ENCODE measurements at regions of chr7 and their contacts with region 1.

Region 1: DNA sequence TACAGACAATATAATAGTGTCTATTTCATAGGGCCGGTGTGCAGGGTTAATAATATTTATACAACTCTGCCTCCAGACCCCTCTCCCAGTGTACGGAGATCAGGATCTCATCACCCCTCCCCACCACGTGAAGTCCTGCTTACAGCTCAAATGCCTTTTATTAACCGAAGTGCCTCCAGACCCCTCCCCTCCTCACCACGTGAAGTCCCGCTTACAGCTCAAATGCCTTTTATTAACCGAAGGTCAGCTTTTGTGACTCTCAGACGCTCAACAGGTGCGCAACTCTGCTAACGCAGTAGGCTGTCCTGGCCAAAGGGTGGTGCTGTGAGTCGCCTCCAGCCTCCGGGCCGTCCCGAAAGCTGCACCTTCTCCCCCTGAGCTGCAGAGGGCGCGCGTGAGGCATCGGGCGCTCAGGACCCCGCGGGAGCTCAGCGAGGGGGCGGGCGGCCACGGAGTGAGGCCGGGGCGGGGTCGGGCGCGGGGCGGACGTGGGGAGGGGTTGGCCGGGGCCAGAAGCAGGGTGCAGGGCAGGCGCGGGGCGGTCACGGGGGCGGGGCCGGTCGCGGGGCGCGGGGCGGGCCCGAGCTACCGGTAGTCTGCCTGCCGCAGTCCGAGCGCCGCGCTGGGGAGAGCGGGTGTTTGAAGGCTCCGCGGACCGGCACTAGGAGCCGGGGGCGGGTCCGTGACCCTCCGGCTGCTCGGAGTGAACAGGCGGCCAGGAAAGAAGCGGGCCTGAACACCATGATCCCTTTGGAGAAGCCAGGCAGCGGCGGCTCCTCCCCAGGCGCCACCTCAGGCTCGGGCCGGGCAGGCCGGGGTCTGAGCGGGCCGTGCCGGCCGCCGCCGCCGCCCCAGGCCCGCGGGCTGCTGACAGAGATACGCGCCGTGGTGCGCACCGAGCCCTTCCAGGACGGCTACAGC is at the start of gene STK17A:
- H3K4me3 ChIP-seq: peak within 1 kb of the TSS; percentile 82
- H3K27ac ChIP-seq: peak within 1 kb of the TSS; percentile 87
- H3K4me1 ChIP-seq: peaks cover 21% of the 10 kb centered on the region
- CTCF ChIP-seq: peak; percentile 98

Region 2: GRCh38 chr7:43119371-43120075 is 463.2 kb before region 1 on chr7:
- CTCF ChIA-PET with region 1: no interaction called
- POLR2A ChIA-PET with region 1: no interaction called
- H3K4me3 ChIP-seq: no peak overlapping the region
- H3K27ac ChIP-seq: no peak overlapping the region
- H3K4me1 ChIP-seq: no peaks in the 10 kb centered on the region
- CTCF ChIP-seq: no peak

Region 3: DNA sequence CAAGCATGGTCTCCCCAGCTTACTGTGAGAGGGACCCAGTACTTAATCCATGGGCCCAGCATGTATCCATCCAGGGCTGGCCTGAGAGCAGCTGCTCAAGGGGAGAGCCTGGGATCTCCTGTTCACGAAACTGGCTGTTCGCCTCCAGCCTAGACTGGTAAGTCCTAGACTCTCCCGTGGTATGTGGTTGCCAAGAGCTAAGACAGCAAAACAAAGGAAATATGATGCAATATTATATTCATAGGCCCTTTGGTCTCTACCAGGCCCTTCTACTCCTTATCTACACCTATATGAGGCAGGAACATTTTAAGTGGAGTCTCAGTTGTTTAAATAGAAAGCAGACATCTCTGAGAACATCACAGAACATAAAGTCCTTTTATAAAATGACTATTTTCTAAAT is 28.8 kb before region 1 on chr7:
- CTCF ChIA-PET with region 1: interaction called, 11 read pairs
- POLR2A ChIA-PET with region 1: no interaction called
- H3K4me3 ChIP-seq: no peak overlapping the region
- H3K27ac ChIP-seq: no peak overlapping the region
- H3K4me1 ChIP-seq: no peaks in the 10 kb centered on the region
- CTCF ChIP-seq: no peak

Region 4: DNA sequence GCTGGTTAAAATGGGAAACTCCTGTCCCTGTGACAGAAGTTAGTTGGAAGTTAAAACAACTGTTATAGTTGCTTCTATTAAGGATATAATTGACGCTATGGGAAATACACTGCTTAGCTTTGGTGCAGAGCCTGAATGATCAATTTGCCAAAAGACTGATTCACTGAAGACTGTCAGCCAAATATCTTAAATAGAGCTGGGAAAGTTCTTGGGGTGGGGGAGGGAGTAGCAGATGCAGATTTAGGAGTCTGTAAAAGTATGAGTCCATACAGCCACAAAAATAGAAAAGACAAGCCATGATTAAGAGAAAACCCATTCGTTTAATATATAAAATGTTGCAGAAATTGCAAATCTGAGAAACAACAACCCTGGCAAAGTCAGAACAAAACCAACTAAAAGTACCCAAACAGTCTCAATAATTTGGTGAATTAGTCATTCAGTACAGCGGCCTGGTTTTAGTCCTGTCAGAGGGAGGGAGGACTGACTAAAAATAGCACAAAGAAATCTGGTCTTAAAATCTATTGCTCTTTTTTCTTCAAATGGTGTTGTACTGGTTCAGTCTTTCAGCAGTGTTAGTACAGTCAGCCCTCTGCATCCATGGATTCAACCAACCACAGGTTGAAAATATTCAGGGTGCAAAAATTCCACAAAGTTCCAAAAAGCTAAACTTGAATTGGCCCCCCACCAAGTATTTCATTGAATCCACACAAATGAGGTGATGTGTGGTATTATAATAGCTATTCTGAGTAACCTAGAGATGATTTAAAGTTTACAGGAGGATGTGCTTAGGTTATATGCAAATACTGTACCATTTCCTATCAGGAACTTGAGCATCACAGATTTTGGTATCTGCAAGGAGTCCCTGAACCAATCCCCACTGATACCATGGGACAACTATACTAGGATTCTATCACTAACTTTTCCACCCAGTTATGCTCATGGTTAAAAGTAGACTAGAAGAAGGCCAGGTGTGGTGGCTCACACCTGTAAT is 30.1 kb after region 1 on chr7:
- CTCF ChIA-PET with region 1: interaction called, 27 read pairs
- POLR2A ChIA-PET with region 1: interaction called, 12 read pairs
- H3K4me3 ChIP-seq: no peak overlapping the region
- H3K27ac ChIP-seq: no peak overlapping the region
- H3K4me1 ChIP-seq: no peaks in the 10 kb centered on the region
- CTCF ChIP-seq: no peak

Region 5: GRCh38 chr7:43639858-43640491 is 57.2 kb after region 1 on chr7:
- CTCF ChIA-PET with region 1: interaction called, 5 read pairs
- POLR2A ChIA-PET with region 1: interaction called, 11 read pairs
- H3K4me3 ChIP-seq: no peak overlapping the region
- H3K27ac ChIP-seq: no peak overlapping the region
- H3K4me1 ChIP-seq: no peaks in the 10 kb centered on the region
- CTCF ChIP-seq: no peak

Region 6: DNA sequence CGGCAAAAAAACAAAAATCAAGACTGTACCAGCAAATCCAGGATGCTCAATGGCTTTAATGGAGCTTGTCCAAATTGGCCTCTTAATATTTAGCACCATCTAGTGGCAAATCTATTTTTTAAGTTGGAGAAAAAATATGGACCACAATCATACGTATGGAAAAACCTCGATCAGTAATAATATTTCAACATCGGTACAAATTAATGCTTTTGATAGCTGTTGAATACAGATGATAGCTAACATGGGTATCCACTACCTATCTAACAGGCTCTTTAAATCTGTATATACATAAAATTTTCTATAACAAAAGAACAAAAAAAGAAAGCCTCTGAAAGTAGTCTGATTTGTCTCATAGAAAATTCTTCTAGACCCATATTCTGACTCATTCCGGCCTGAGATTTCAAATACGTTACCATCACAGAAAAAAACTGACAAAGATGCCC is 117.3 kb after region 1 on chr7:
- CTCF ChIA-PET with region 1: interaction called, 143 read pairs
- POLR2A ChIA-PET with region 1: interaction called, 62 read pairs
- H3K4me3 ChIP-seq: no peak overlapping the region
- H3K27ac ChIP-seq: no peak overlapping the region
- H3K4me1 ChIP-seq: no peaks in the 10 kb centered on the region
- CTCF ChIP-seq: no peak

Region 7: GRCh38 chr7:43834463-43835251 is 251.9 kb after region 1 on chr7:
- CTCF ChIA-PET with region 1: interaction called, 42 read pairs
- POLR2A ChIA-PET with region 1: interaction called, 12 read pairs
- H3K4me3 ChIP-seq: no peak overlapping the region
- H3K27ac ChIP-seq: no peak overlapping the region
- H3K4me1 ChIP-seq: no peaks in the 10 kb centered on the region; the same call in 1 of the 2 replicates
- CTCF ChIP-seq: no peak

Measured in HEK293 (cell line).